Mammary epithelial cell (primary cell): ENCODE measurements at regions of chr3 and their contacts with region 1.

Region 1: DNA sequence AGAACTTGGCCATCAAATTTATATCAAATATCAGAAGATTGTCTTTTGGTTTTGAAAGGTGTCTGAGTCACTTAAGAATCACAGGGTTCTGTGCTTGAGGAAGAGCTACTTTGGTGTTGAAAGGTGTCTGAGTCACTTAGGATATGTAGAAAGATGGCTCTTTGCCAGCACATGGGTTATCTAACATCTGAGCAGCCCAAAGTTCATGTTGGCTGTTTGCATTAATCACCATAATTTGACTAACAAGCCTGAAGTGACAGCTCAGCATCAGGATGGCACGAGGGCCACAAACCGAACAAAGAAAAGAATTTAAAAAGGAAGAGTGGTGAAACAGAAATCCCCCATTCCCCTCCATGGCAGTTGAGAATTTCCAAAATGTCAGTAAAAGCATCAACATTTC is 190.5 kb upstream of the CMC1 start:
- DNase-seq: peak; percentile 87
- H3K4me3 ChIP-seq: no peak overlapping the region
- H3K27ac ChIP-seq: peak overlapping the region; percentile 24
- H3K4me1 ChIP-seq: peaks cover 32% of the 10 kb centered on the region
- H3K27me3 ChIP-seq: no peaks in the 10 kb centered on the region
- CTCF ChIP-seq: no peak

Region 2: DNA sequence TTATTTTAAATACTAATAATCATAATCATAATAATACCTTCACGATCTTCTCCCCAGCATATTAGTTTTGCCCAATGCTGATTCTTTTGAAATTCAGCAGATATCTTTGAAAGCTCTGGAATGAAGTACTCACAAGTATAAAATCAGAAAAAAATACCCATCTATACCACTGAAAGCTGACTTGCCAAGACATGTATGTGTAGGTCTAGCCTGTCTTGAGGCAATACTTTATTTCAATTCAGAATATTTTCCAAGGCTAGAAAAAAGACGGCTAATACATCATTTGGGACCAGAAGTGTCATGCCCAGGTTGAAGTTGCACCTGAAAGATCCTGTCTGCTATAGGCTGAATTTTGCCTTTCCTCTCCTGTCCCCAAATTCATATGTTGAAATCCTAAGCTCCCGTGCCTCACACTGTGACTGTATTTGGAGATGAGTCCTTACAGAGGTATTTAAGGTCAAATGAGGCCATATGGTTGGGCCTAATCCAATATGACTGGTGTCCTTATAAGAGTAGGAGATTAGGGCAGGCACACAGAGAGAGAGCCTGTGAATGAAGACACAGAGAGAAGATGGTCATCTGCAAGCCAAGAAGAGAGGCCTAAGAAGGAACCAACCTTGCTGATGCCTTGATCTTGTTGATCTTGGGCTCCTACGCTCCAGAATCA is 65.4 kb before region 1 on chr3:
- CTCF ChIA-PET with region 1: no interaction called
- dilution Hi-C with region 1: no loop called
- in situ Hi-C with region 1: no loop called
- intact Hi-C with region 1: loop called (anchors 5 kb)
- DNase-seq: peak; percentile 29
- H3K4me3 ChIP-seq: no peak overlapping the region
- H3K27ac ChIP-seq: no peak overlapping the region
- H3K4me1 ChIP-seq: peaks cover 12% of the 10 kb centered on the region
- H3K27me3 ChIP-seq: no peaks in the 10 kb centered on the region
- CTCF ChIP-seq: no peak

Region 3: GRCh38 chr3:28122227-28122626 is 71.3 kb after region 1 on chr3:
- CTCF ChIA-PET with region 1: no interaction called
- dilution Hi-C with region 1: no loop called
- in situ Hi-C with region 1: no loop called
- intact Hi-C with region 1: no loop called
- DNase-seq: no peak
- H3K4me3 ChIP-seq: no peak overlapping the region
- H3K27ac ChIP-seq: no peak overlapping the region
- H3K4me1 ChIP-seq: no peaks in the 10 kb centered on the region
- H3K27me3 ChIP-seq: peaks cover 3% of the 10 kb centered on the region
- CTCF ChIP-seq: no peak

Region 4: GRCh38 chr3:28348629-28349483 is 298.0 kb after region 1 on chr3 and contains the starts of genes AZI2 and ZCWPW2:
- CTCF ChIA-PET with region 1: no interaction called
- dilution Hi-C with region 1: no loop called
- in situ Hi-C with region 1: no loop called
- intact Hi-C with region 1: loop called (anchors 5 kb)
- DNase-seq: peak; percentile 94
- H3K4me3 ChIP-seq: peak within 1 kb of the TSS; percentile 69 to 91 (median 72)
- H3K27ac ChIP-seq: peak within 1 kb of the TSS; percentile 99
- H3K4me1 ChIP-seq: peaks cover 3% of the 10 kb centered on the region
- H3K27me3 ChIP-seq: no peaks in the 10 kb centered on the region
- CTCF ChIP-seq: peak in 1 of 2 donors; percentile 31
- total RNA-seq, gene AZI2: 77.2 to 80.8 TPM
- total RNA-seq, gene ZCWPW2: 0.17 TPM in 1 of 2 donors, not detected in the other